Activated CD4-positive, alpha-beta memory T cell treated with anti-CD3 and anti-CD28 coated beads for 36 hours (primary cell): ENCODE measurements at regions of chr20 and their contacts with region 1.

Region 1: DNA sequence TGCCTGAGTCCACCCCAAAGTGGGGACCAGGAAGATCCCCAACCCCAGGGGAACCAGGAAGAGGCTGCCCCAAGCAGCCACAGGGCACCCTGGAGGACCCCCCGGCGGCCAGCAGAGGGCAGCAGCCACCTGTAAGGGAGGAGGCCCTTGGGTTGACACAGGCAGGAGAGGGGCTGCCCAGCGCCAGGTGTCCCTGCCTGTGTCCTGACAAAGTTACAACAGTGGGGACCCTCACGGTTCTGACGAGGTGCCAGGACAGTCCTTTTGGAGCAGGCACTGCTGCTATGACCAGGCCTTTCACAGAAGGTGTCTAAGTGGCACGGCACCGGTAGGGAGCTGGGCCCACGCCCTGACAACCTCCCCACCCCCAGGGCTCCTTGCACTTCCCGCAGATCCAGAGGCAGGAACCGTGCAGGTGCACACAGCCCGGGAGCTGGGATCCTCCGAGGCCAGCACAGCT is 176.7 kb downstream of the BMP7 start:
- DNase-seq: peak; percentile 76
- H3K4me3 Mint-ChIP-seq: no peak overlapping the region
- H3K27ac Mint-ChIP-seq: no peak overlapping the region
- H3K4me1 Mint-ChIP-seq: peaks cover 11% of the 10 kb centered on the region
- H3K27me3 Mint-ChIP-seq: peaks cover 10% of the 10 kb centered on the region

Region 2: DNA sequence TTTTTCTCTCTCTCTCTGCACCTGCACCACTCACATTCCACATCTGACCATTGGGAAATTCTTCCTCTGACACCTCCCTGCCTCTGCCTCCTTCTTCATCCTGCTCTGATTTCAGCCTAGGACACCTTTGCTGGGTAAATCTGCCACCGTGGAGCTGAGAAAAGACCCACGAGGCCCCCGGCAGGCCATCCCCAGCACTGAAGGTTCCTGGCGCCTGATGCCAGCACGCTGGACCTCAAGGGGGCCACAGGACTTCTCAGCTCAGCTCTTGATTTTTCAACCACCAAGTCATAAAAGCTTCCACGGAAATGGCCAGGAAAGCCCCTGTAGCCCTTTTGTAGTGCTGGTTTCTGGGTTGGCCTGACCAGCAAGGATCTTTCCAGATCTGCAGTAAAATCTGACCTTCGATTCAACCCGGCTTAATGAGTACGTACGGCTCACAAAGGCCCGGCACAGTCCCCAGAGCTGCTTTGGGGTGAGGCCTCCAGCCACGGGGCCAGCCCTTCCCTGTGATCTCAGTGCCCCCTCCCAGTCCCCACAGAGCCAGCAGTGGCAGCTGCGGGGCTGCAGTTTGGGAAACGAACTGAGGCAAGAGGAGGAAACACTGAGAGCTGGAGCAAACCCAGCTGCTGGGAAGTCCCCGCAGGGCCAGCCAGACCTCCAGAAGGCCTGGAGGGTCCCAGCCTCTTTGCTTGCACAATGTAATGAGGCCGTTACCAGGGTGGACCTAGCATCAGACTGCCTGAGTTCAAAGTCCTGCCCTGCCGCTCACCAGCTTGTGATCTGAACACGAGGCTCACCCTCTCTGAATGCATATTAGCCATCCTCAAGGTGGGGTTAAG is 19.2 kb after region 1 on chr20:
- CTCF ChIA-PET with region 1: no interaction called
- POLR2A ChIA-PET with region 1: no interaction called
- intact Hi-C with region 1: no loop called
- DNase-seq: no peak
- H3K4me3 Mint-ChIP-seq: no peak overlapping the region
- H3K27ac Mint-ChIP-seq: no peak overlapping the region
- H3K4me1 Mint-ChIP-seq: no peaks in the 10 kb centered on the region
- H3K27me3 Mint-ChIP-seq: peaks cover 1% of the 10 kb centered on the region

Region 3: DNA sequence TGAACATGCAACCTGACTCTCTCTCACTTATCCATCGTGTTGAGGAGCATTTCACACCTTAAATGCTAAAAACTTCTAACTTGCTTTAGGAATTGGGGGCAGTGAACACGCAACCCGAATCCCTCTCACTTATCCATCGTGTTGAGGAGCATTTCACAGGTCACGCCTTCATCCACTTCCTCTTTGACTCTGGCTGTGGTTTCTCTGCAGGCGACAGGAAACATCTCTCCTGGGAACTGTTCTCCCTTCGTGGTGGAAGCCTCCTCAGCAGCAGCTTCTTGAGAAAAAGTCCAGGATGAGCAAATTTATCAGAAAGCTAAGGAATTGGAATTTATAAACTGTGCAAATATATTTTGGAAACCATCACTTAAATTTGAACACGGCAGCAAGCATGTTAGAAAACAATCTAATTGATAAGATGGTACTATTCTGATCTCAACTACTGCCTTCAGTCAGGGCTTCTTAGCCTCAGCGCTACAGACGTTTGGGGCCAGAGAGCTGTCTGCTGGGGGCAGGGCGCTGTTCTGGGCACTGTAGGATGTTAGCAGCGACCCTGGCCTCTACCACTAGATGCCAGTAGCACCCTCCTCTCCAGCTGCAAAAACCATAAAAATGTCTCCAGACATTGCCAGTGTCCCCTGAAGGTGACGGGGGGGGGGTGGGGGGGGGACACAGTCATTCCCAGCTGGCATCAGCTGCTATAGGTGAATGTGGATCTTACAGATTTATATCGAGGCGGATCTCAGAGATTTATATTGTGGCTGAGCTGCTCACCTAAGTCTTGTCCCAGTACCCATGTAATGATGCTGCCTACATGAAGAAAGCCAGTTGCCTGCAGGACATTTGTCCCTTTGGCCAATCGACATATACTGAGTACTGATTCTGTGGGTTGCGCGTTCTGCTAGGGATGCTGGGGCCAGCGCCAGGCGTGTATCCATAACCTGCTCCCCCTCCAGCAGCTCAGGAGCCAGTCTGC is 409.0 kb after region 1 on chr20:
- CTCF ChIA-PET with region 1: no interaction called
- POLR2A ChIA-PET with region 1: no interaction called
- intact Hi-C with region 1: loop called (anchors 5 kb)
- DNase-seq: peak; percentile 63
- H3K4me3 Mint-ChIP-seq: no peak overlapping the region
- H3K27ac Mint-ChIP-seq: no peak overlapping the region
- H3K4me1 Mint-ChIP-seq: peaks cover 10% of the 10 kb centered on the region
- H3K27me3 Mint-ChIP-seq: peaks cover 26% of the 10 kb centered on the region